Heart left ventricle (tissue), 16 donors: ENCODE measurements at regions of chr15 and their contacts with region 1.

Region 1: GRCh38 chr15:74842581-74843444 is at the start of gene ULK3:
- DNase-seq: peak; percentile 92 to 95 (median 92)
- ATAC-seq: peak; percentile 62 to 93 (median 91)
- H3K4me3 ChIP-seq: peak within 1 kb of the TSS; percentile 70 to 99 (median 94)
- H3K27ac ChIP-seq: peak within 1 kb of the TSS; percentile 81 to 93 (median 90)
- H3K4me1 ChIP-seq: peaks cover 0 to 38% (median 21%) of the 10 kb centered on the region in 12 donors
- H3K27me3 ChIP-seq: no peaks in the 10 kb centered on the region
- CTCF ChIP-seq: peak; percentile 56 to 96 (median 75)
- POLR2A ChIP-seq: peak in 1 of 2 donors; percentile 86
- total RNA-seq, gene ULK3: 22.6 to 39.3 (median 29.5) TPM

Region 2: DNA sequence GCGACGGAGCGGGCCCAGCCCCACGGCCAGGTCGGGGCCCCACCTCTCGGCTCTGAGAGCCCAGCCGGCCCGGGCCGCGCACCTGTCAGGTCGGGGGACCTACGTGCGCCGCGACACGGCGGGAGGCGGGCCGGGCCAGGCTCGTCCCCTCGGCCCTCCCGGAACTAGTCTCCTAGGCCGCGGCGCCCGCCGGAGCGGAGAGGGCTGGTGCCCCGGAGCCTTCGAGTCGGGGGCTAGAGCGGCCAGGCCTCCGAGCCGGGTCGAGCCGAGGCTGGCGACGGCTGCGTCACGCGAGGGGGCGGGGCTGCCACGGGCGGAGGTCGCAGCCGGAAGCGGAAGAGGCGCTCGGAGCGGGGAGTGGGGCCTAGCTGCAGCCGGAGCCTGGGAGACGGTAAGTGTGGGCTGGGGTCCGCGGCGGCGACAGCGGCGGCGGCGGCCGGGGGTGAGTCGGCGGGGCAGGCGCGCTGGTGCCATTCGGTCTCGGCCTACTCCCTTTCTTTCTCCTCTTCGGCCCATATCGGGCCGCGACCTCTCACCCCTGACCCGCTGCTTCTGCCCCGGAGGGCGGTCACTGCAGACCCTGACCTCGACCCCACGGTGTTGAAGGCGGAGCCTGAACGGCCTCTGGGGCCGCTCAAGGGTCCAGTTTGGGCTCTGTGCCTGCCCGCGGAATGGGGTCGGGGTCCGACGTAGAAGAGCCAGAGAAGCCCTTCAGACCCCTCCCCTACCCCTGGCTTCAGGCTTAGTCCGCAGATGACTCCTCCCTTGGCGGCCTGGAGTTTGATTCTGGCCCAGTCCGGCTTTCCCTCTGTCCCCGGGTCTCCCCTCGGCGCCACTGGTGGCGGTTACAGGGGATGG is 227.1 kb before region 1 on chr15 and contains the start of gene CLK3:
- intact Hi-C with region 1: loop called in 1 of 10 experiments (anchors 5 kb)
- DNase-seq: peak; percentile 96 to 98 (median 98)
- ATAC-seq: peak; percentile 70 to 90 (median 85)
- H3K4me3 ChIP-seq: peak within 1 kb of the TSS; percentile 68 to 100 (median 92)
- H3K27ac ChIP-seq: peak within 1 kb of the TSS; percentile 92 to 100 (median 97)
- H3K4me1 ChIP-seq: peaks cover 3 to 70% (median 39%) of the 10 kb centered on the region in 12 donors
- H3K27me3 ChIP-seq: no peaks in the 10 kb centered on the region
- CTCF ChIP-seq: no peak
- POLR2A ChIP-seq: peak in 1 of 2 donors; percentile 85
- total RNA-seq, gene CLK3: 32.8 to 75.9 (median 49.9) TPM

Region 3: DNA sequence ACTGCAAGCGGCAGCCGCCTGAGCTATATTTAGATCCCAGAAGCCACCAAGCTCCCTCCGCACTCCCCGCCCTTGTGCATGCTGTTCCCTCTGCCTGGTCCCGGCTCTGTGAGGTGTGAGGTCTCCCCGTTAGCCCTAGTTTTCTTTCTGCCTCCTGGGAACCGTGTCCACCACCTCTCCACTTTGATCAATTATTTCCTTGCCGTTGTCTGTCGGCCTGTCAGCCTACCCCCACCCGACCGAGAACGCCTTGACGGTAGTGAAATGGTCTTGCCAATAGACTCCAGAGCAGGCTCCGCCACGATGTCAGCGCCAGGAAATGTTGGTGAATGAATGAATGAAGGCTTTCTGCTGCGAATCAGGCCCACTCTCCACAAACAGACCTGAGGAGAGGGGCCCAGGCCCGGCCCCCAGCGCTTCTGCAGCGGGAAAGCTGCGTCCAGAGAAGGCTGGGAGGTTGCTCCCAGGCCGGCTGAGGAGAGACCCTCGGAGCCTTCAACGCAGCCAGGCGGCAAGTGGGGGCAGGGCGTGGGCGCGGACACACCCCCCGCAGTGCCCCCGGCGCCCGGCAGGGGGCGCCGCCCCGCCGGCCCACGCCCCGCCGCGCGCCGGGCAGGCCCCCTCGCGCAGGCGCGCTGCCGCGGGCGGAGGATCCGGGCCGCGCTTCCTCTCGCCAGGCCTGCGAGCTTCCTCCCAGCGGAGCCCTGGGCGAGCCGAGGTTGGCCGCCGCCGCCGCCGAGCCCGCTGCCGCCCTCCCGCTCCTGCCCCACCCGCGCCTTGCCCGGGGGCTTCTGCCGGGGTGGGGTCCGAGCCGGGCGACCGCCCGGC is 61.2 kb before region 1 on chr15 and contains the start of gene CSK:
- intact Hi-C with region 1: loop called in 3 of 10 experiments (anchors 2 to 5 kb)
- DNase-seq: peak; percentile 83 to 92 (median 86)
- ATAC-seq: peak in 3 of 4 donors; percentile 58 to 65 (median 59)
- H3K4me3 ChIP-seq: peak within 1 kb of the TSS; percentile 70 to 98 (median 82)
- H3K27ac ChIP-seq: peak within 1 kb of the TSS; percentile 82 to 98 (median 91)
- H3K4me1 ChIP-seq: peaks cover 34 to 90% (median 63%) of the 10 kb centered on the region in 12 donors
- H3K27me3 ChIP-seq: no peaks in the 10 kb centered on the region
- CTCF ChIP-seq: peak; percentile 40 to 69 (median 60)
- POLR2A ChIP-seq: no peak
- total RNA-seq, gene CSK: 19.1 to 66.7 (median 28.4) TPM

Region 4: GRCh38 chr15:74889883-74890664 is 47.3 kb after region 1 on chr15 and contains the start of gene MPI:
- intact Hi-C with region 1: loop called in 2 of 10 experiments (anchors 5 to 10 kb)
- DNase-seq: peak; percentile 86 to 93 (median 90)
- ATAC-seq: peak; percentile 93 to 97 (median 94)
- H3K4me3 ChIP-seq: peak within 1 kb of the TSS; percentile 65 to 96 (median 78)
- H3K27ac ChIP-seq: peak within 1 kb of the TSS; percentile 18 to 89 (median 84)
- H3K4me1 ChIP-seq: peaks cover 2 to 45% (median 25%) of the 10 kb centered on the region in 12 donors
- H3K27me3 ChIP-seq: no peaks in the 10 kb centered on the region
- CTCF ChIP-seq: peak in 2 of 12 donors; percentile 7 to 13
- POLR2A ChIP-seq: peak in 1 of 2 donors; percentile 58
- total RNA-seq, gene MPI: 22.4 to 85.7 (median 59.3) TPM

Region 5: GRCh38 chr15:74906446-74907162 is 63.8 kb after region 1 on chr15 and contains the start of gene FAM219B:
- intact Hi-C with region 1: loop called in 7 of 10 experiments (anchors 1 to 10 kb)
- DNase-seq: peak; percentile 94 to 96 (median 96)
- ATAC-seq: peak; percentile 92 to 96 (median 92)
- H3K4me3 ChIP-seq: peak within 1 kb of the TSS; percentile 62 to 99 (median 86)
- H3K27ac ChIP-seq: peak within 1 kb of the TSS; percentile 90 to 99 (median 96)
- H3K4me1 ChIP-seq: peaks cover 0 to 31% (median 21%) of the 10 kb centered on the region in 12 donors
- H3K27me3 ChIP-seq: no peaks in the 10 kb centered on the region
- CTCF ChIP-seq: peak in 1 of 12 donors; percentile 8
- POLR2A ChIP-seq: peak; percentile 62 to 92
- total RNA-seq, gene FAM219B: 37.0 to 110 (median 88.8) TPM

Region 6: DNA sequence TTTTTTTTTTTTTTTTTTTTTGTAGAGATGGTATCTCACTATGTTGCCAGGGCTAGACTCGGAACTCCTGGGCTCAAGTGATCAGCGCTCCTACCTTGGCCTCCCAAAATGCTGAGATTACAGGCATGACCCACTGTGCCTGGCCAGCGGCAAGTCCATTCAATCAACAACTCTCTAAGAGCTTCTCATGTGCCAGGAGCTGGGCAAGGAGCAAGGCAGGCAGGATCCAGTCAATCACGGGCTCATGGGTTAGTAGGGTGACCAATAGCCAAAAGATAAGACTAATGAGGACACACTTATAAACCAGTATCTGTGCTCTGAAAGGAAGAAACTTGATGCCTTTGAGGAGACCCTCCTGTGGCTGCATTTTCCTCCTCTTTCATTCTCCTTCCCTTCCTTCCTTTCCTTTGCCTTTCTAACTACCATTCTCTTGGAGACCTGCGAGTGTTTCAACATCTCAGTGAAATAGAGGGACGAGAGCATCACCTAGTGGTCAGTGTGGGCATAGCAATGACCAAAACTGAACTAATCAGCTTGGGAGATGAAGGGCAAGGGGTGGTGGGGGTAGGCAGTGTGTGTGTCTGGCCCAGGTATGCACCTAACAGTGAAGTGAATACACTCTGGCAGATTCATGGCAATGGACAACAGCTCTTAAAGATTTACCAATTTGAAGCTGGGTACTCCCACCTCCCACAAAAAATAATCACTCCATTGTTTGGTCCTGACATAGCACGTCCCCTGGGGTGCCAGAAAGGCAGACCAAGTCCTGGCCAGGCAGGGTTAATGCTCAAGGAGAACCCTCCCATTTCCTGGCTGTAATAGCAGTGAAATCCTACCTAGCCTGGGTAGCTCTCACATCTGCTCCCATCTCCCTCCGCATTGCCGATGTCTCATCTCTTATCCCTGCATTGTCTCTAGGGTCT is 107.5 kb after region 1 on chr15:
- intact Hi-C with region 1: loop called in 1 of 10 experiments (anchors 5 kb)
- DNase-seq: peak in 4 of 5 donors; percentile 55 to 70 (median 56)
- ATAC-seq: peak in 3 of 4 donors; percentile 68 to 83 (median 77)
- H3K4me3 ChIP-seq: no peak overlapping the region
- H3K27ac ChIP-seq: no peak overlapping the region
- H3K4me1 ChIP-seq: peaks cover 0 to 19% (median 9%) of the 10 kb centered on the region in 12 donors
- H3K27me3 ChIP-seq: no peaks in the 10 kb centered on the region
- CTCF ChIP-seq: peak; percentile 92 to 98 (median 95)
- POLR2A ChIP-seq: no peak

Region 7: GRCh38 chr15:74995241-74995778 is 152.5 kb after region 1 on chr15 and contains the start of gene SCAMP5:
- intact Hi-C with region 1: no loop called
- DNase-seq: peak; percentile 92 to 95 (median 94)
- ATAC-seq: peak; percentile 91 to 95 (median 93)
- H3K4me3 ChIP-seq: peak within 1 kb of the TSS; percentile 47 to 87 (median 72)
- H3K27ac ChIP-seq: peak within 1 kb of the TSS in 1 of 12 donors; percentile 50
- H3K4me1 ChIP-seq: peaks cover 0 to 13% (median 8%) of the 10 kb centered on the region in 12 donors
- H3K27me3 ChIP-seq: peaks cover 0 to 18% (median 3%) of the 10 kb centered on the region in 9 donors
- CTCF ChIP-seq: no peak
- POLR2A ChIP-seq: no peak
- total RNA-seq, gene SCAMP5: 1.7 to 7.1 (median 4.2) TPM

Region 8: DNA sequence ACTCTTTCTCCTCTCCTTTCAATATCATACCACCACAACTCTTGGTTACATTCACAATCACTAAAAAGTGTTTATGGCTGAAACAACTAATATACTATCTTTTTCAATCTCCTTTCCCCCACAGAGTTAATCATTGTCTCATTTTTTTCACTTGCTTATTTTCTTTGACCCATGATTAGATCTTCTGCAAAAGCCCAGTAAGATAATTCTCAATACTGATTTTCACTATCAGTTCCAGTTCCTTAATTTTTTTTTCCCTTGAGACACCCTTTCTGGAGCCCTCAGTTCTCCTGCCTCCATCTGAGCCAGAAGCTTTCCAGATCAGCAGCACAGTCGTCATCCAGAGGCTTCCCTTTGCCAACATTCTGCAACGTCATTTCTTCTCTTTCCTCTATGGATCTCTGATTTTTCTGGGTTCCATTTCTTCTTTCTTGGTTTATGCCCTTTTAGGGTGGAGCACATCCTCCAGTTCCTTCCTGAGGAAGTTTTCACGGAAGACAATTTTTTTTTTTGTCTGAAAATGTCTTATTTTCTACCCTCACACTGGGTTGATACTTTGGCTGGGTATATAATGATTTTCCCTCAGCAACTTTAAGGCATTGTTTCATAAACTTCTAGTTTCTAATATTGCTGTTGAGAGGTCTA is 270.2 kb after region 1 on chr15:
- intact Hi-C with region 1: no loop called
- DNase-seq: no peak
- ATAC-seq: peak in 3 of 4 donors; percentile 11 to 63 (median 34)
- H3K4me3 ChIP-seq: no peak overlapping the region
- H3K27ac ChIP-seq: peak overlapping the region in 3 of 12 donors; percentile 20 to 72 (median 49)
- H3K4me1 ChIP-seq: peaks cover 0 to 49% (median 0%) of the 10 kb centered on the region in 12 donors
- H3K27me3 ChIP-seq: no peaks in the 10 kb centered on the region
- CTCF ChIP-seq: no peak
- POLR2A ChIP-seq: no peak